Activated naive CD4-positive, alpha-beta T cell treated with anti-CD3 and anti-CD28 coated beads for 36 hours (primary cell): ENCODE measurements at regions of chr20 and their contacts with region 1.

Region 1: DNA sequence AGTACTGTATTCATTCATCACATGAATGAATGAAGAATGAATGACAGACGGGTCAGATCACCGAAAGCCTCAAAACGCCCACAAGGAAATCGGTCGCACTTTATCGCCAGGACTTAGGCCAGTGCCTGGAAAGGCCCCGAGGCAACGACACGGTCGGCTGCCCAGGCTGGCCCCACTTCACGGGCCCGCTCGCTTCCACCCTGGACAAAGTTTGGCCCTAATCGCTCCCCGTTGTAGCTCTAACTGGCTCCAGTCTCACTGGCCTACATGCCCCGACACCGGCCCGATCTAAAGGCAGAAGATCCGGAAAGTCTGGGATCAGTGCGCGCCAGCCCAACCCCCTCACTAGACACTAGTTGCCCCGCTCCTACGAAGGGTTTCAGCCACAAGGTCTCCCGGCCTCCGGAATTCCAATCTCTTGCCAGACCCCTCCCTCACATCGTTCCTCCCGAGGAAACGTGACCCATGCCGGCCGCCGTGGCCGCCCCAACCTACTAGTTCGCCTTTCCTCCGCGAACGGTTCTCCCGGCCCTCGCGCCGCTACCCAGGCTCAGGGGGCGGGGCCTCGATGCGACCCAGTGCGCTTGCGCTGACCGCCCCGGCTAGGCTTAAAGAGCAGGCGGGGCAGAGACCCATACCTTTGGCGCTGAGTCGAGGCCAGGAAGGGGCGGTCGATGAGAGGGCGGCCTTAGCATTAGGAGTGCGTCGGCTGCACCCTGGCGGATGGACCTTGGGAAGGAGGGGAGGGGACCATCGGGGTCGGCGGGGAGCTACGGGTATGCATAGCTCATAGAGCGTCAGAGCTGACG is at the starts of genes GSS and MYH7B:
- DNase-seq: peak; percentile 99
- H3K4me3 Mint-ChIP-seq: peak within 1 kb of the TSS; percentile 98
- H3K27ac Mint-ChIP-seq: peak within 1 kb of the TSS; percentile 92
- H3K4me1 Mint-ChIP-seq: peaks cover 30% of the 10 kb centered on the region
- H3K27me3 Mint-ChIP-seq: no peaks in the 10 kb centered on the region
- total RNA-seq, gene GSS: 84.3 to 86.0 TPM
- total RNA-seq, gene MYH7B: 0.20 to 0.86 TPM

Region 2: GRCh38 chr20:34363062-34363464 is 592.4 kb before region 1 on chr20 and contains the start of gene ITCH:
- CTCF ChIA-PET with region 1: no interaction called
- intact Hi-C with region 1: loop called (anchors 1 kb)
- DNase-seq: peak; percentile 96
- H3K4me3 Mint-ChIP-seq: peak within 1 kb of the TSS; percentile 97
- H3K27ac Mint-ChIP-seq: peak within 1 kb of the TSS; percentile 95
- H3K4me1 Mint-ChIP-seq: peaks cover 34% of the 10 kb centered on the region
- H3K27me3 Mint-ChIP-seq: no peaks in the 10 kb centered on the region
- total RNA-seq, gene ITCH: 35.3 to 40.0 TPM

Region 3: GRCh38 chr20:34629342-34629741 is 326.1 kb before region 1 on chr20:
- CTCF ChIA-PET with region 1: no interaction called
- intact Hi-C with region 1: no loop called
- DNase-seq: no peak
- H3K4me3 Mint-ChIP-seq: no peak overlapping the region
- H3K27ac Mint-ChIP-seq: no peak overlapping the region
- H3K4me1 Mint-ChIP-seq: no peaks in the 10 kb centered on the region
- H3K27me3 Mint-ChIP-seq: no peaks in the 10 kb centered on the region

Region 4: GRCh38 chr20:34834459-34834893 is 121.0 kb before region 1 on chr20:
- CTCF ChIA-PET with region 1: interaction called, 5 read pairs
- intact Hi-C with region 1: loop called (anchors 1 kb)
- DNase-seq: no peak
- H3K4me3 Mint-ChIP-seq: no peak overlapping the region
- H3K27ac Mint-ChIP-seq: no peak overlapping the region
- H3K4me1 Mint-ChIP-seq: no peaks in the 10 kb centered on the region
- H3K27me3 Mint-ChIP-seq: peaks cover 7% of the 10 kb centered on the region

Region 5: DNA sequence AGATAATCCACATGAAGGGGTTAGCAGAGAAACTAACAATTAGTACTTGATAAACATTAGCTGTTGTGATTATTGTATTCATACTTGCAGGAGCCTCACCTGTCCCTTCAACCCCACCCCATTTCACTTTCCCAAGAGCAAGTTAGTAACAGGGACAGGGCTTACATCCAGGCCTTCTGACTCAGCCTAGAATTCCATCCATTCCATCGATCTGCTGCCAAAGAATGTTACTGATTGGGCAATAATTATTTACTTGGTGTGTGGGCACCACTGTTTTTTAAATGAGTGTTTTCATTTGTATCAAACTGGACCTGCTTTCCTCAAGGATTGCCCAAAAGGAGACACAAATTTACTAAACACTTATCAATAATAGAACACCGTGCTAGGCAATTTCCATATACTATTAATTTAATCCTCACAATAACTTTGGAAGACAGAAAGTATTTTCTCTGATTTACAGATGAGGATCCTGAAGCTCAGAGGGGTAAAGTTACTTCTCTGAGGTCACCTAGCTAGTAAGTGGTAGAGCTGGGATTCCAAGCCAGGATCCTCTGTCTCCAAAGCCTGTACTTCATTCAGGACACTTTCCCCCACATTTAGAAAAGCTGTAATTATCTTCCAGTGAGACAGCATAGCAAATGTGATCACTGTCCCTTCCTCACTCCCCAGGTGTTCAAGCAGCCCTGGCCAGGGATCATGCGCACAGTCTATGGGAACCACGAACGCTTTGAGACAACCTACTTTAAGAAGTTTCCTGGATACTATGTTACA is 32.6 kb before region 1 on chr20:
- CTCF ChIA-PET with region 1: interaction called, 3 read pairs
- intact Hi-C with region 1: loop called (anchors 2 kb)
- DNase-seq: no peak
- H3K4me3 Mint-ChIP-seq: no peak overlapping the region
- H3K27ac Mint-ChIP-seq: no peak overlapping the region
- H3K4me1 Mint-ChIP-seq: peaks cover 29% of the 10 kb centered on the region
- H3K27me3 Mint-ChIP-seq: no peaks in the 10 kb centered on the region

Region 6: DNA sequence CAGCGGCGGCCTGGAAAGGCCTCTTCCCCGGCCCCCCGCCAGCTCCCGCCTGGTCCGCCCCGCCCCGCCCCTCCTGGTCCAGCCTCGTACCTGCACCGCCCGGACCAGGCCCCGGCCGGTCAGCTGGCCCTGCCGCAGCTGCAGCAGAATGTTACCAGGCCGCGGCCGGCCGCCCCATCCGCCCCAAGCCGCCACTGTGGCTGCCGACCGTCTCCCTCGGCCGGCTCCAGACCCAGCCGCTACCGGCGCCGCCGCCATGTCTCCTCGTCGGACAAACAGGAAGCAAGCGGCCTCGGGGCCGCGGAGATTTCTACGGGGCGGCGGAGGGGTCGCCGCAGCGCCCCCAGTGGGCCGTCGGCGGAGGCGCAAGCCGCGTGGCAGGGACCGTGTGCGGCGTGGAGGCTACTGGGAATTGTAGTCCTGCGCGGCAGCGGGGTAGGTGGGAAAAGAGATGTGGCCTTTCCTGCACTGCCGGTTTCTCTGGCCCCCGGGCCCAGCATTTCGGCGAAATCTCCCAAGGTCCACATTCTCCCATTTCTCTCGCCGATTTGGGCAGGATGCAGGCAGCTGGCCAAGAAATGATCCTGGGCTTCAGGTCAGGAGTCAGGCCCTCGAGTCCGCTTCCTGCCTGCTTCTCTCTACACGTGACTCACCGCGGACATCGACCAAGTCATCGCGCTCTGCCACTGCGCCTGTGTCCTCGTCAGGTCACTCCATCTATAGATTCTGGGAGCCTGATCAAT is 137.3 kb after region 1 on chr20 and contains the start of gene TRPC4AP:
- CTCF ChIA-PET with region 1: interaction called, 3 read pairs
- intact Hi-C with region 1: loop called (anchors 1 kb)
- DNase-seq: peak; percentile 90
- H3K4me3 Mint-ChIP-seq: peak within 1 kb of the TSS; percentile 89
- H3K27ac Mint-ChIP-seq: peak within 1 kb of the TSS; percentile 100
- H3K4me1 Mint-ChIP-seq: peaks cover 59% of the 10 kb centered on the region
- H3K27me3 Mint-ChIP-seq: no peaks in the 10 kb centered on the region
- total RNA-seq, gene TRPC4AP: 49.6 to 51.7 TPM

Region 7: DNA sequence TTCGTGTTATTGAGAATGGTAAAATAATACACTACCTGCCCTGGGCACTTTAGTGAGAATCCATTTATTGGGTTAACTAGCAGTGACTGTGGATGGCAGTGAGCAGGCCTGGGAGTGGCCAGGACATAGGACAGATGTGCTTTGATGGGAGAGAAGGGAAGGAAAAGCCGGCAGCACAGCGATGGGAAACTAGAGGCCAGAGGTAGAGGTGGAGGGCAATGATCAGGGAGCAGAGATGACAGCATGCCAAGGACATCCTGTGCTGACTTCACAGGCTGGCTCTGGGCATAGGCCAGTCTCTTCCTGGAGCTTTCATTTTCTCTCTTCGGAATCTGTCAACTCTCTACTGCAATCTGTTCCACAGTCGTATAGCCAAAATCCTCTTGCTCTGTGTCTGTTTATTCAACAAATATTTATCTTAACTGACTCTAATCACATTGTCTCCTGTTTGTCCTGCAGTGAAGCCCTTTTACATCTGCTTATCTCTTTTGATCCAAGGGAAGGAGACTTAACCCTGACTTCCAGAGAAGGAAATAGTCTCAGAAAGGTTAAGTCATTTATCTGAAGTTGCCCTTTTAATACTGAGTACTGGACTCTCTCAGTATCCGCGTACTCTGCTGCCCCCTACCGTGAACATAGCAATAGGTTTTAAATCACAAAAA is 252.6 kb after region 1 on chr20:
- CTCF ChIA-PET with region 1: no interaction called
- intact Hi-C with region 1: loop called (anchors 2 kb)
- DNase-seq: peak; percentile 91
- H3K4me3 Mint-ChIP-seq: no peak overlapping the region
- H3K27ac Mint-ChIP-seq: no peak overlapping the region
- H3K4me1 Mint-ChIP-seq: no peaks in the 10 kb centered on the region
- H3K27me3 Mint-ChIP-seq: no peaks in the 10 kb centered on the region

Region 8: GRCh38 chr20:35619196-35620095 is 664.0 kb after region 1 on chr20:
- CTCF ChIA-PET with region 1: no interaction called
- intact Hi-C with region 1: no loop called
- DNase-seq: peak; percentile 88
- H3K4me3 Mint-ChIP-seq: peak overlapping the region; percentile 82
- H3K27ac Mint-ChIP-seq: peak overlapping the region; percentile 70
- H3K4me1 Mint-ChIP-seq: peaks cover 47% of the 10 kb centered on the region
- H3K27me3 Mint-ChIP-seq: peaks cover 4% of the 10 kb centered on the region